Tibial artery (tissue), 4 donors: ENCODE measurements at regions of chr21 and their contacts with region 1.

Region 1: GRCh38 chr21:43728467-43729390 is 9.8 kb downstream of the PDXK start:
- DNase-seq: peak; percentile 97 to 99
- H3K4me3 ChIP-seq: peak overlapping the region; percentile 55 to 72
- H3K27ac ChIP-seq: peak overlapping the region; percentile 91 to 92
- H3K4me1 ChIP-seq: peaks cover 4 to 77% (median 55%) of the 10 kb centered on the region in 4 donors
- H3K27me3 ChIP-seq: no peaks in the 10 kb centered on the region
- CTCF ChIP-seq: peak; percentile 7 to 40

Region 2: DNA sequence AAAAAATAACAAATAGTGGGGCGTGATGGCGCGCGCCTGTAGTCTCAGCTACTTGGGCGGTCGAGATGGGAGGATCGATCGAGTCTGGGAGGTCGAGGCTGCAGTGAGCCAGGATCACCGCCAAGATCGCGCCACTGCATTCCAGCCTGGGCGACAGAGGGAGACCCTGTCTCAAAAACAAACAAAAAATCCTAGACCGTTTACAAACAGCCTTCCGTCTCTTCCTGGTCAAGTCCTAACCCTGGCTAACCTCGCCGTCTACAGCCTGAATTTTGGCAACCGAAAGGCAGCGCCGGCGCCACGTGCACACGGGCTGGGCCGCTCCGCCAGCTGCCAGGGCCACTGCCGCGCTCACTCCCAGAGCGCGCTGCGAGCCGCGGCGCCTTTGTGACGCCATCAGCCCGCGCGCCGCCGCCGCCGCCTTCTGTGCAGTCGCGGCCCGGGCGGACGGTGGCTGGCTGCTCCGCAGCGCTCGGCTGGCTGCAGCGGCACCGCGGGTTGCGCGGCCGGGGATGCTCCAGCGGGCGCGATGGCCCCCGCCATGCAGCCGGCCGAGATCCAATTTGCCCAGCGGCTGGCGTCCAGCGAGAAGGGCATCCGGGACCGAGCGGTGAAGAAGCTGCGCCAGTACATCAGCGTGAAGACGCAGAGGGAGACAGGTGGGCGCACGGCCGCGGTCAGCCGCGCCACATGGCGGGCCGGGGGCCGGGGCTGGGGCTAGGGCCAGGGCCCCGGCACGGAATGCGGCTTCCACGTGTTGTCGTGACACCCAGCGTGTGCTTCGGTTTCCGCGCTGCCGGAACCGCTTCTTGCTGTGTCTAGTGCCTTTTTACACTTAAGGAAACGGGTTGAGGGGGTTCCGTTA is 69.4 kb before region 1 on chr21 and contains the starts of genes HSF2BP and RRP1B:
- intact Hi-C with region 1: loop called (anchors 2 kb)
- DNase-seq: peak; percentile 70 to 89
- H3K4me3 ChIP-seq: peak within 1 kb of the TSS; percentile 77 to 91
- H3K27ac ChIP-seq: peak within 1 kb of the TSS; percentile 76 to 84
- H3K4me1 ChIP-seq: peaks cover 0 to 24% (median 12%) of the 10 kb centered on the region in 4 donors
- H3K27me3 ChIP-seq: no peaks in the 10 kb centered on the region
- CTCF ChIP-seq: no peak